Activated CD4-positive, alpha-beta memory T cell treated with anti-CD3 and anti-CD28 coated beads, Interleukin-2, amount 10 ng/mL, durations not matched to agents 7 days and 5 days (primary cell): ENCODE measurements at regions of chr20 and their contacts with region 1.

Region 1: GRCh38 chr20:2206957-2207769 is 88.6 kb upstream of the TGM3 start:
- DNase-seq: peak; percentile 66
- H3K4me3 Mint-ChIP-seq: peak overlapping the region; percentile 63
- H3K27ac Mint-ChIP-seq: no peak overlapping the region
- H3K4me1 Mint-ChIP-seq: peaks cover 1% of the 10 kb centered on the region
- H3K27me3 Mint-ChIP-seq: peaks cover 27% of the 10 kb centered on the region

Region 2: DNA sequence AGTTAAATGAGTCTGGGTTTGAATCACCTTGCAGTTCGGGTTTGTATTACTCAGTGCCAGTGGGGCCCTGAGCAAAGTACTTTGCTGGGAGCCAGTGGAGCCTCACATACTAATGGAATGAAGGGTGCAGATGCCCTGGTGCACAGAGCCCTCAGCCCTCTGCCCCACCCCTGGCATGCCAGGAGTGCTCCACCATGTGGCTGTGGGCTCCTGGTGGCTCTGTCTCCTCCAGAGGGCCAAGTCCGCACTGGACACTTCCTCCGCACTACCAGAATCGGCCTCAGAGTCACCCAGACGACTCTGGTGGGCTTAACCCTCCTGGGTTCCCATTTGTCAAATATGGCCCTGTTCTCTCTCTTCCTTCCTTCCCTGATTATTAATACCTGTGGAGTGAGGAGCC is 11.5 kb before region 1 on chr20:
- CTCF ChIA-PET with region 1: interaction called, 11 read pairs
- POLR2A ChIA-PET with region 1: no interaction called
- DNase-seq: no peak
- H3K4me3 Mint-ChIP-seq: no peak overlapping the region
- H3K27ac Mint-ChIP-seq: no peak overlapping the region
- H3K4me1 Mint-ChIP-seq: no peaks in the 10 kb centered on the region
- H3K27me3 Mint-ChIP-seq: peaks cover 7% of the 10 kb centered on the region

Region 3: GRCh38 chr20:2217857-2218539 is 10.8 kb after region 1 on chr20:
- CTCF ChIA-PET with region 1: interaction called, 14 read pairs
- POLR2A ChIA-PET with region 1: no interaction called
- DNase-seq: no peak
- H3K4me3 Mint-ChIP-seq: no peak overlapping the region
- H3K27ac Mint-ChIP-seq: no peak overlapping the region
- H3K4me1 Mint-ChIP-seq: peaks cover 2% of the 10 kb centered on the region
- H3K27me3 Mint-ChIP-seq: peaks cover 9% of the 10 kb centered on the region

Region 4: GRCh38 chr20:2451939-2452732 is 245.0 kb after region 1 on chr20:
- CTCF ChIA-PET with region 1: interaction called, 38 read pairs
- POLR2A ChIA-PET with region 1: interaction called, 4 read pairs
- DNase-seq: peak; percentile 72
- H3K4me3 Mint-ChIP-seq: no peak overlapping the region
- H3K27ac Mint-ChIP-seq: no peak overlapping the region
- H3K4me1 Mint-ChIP-seq: peaks cover 19% of the 10 kb centered on the region
- H3K27me3 Mint-ChIP-seq: peaks cover 5% of the 10 kb centered on the region